ENCODE measurements at regions of chr17 and their contacts with region 1.

Region 1: GRCh38 chr17:7403977-7404736 is at the start of gene TMEM256:
- DNase-seq: peak; percentile 96 to 99
- H3K4me3 ChIP-seq: peak within 1 kb of the TSS; percentile 76
- H3K27ac ChIP-seq: peak within 1 kb of the TSS; percentile 51; the same call in 1 of the 2 replicates
- H3K4me1 ChIP-seq: peaks cover 15% of the 10 kb centered on the region
- H3K27me3 ChIP-seq: no peaks in the 10 kb centered on the region
- CTCF ChIP-seq: no peak
- total RNA-seq, gene TMEM256: 55.4 and 91.7 TPM in 2 replicates

Region 2: GRCh38 chr17:7177196-7177953 is 226.8 kb before region 1 on chr17:
- CTCF ChIA-PET with region 1: no interaction called
- POLR2A ChIA-PET with region 1: no interaction called
- intact Hi-C with region 1: no loop called
- DNase-seq: peak; percentile 39 to 75
- H3K4me3 ChIP-seq: peak overlapping the region; percentile 76
- H3K27ac ChIP-seq: no peak overlapping the region
- H3K4me1 ChIP-seq: peaks cover 4% of the 10 kb centered on the region
- H3K27me3 ChIP-seq: no peaks in the 10 kb centered on the region
- CTCF ChIP-seq: peak; percentile 92

Region 3: DNA sequence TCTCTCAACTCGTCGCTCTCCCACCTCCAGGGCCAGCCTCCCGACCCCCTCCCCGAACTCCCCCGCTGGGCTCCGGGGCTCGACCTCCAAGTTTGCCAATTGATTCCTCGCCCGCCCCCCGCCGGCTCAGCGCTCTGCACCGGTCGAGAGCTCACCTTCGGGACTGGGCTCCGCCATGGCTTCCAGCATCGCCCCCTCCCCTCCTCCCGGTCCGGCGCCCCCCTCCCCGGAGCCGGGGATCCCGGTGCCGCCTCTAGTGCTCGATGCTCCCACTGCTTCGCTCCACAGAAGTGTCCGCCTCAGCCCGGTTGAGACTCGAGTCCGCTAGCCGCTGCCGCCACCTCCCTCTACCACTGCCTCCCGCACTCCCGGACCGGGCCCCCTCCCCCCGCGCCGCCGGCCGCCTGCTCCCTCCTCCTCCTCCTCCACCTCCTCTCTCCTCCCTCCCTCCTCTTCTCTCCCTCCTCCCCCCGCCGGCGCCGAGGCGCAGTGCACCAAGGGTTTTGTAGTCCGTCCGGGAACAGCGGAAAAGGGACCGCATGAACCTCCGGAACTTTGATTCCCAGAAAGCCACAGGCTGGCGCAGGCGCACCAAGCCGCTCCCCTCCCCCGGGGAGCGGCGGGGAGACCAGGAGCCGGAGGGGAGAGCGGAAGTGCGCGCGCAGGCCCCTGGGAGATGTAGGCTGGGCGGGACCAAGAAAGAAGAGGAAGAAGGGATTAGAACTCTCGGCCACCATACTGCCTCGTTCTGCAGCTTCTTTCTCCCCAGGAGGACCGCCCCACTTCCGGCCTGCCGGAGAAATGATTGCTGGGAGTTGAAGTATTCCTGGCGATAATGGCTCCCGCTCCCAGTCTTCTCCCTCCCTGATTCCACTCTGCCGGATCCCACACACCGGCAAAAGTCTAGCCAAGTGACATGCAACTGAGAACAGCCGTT is 164.8 kb before region 1 on chr17 and contains the start of gene PHF23:
- CTCF ChIA-PET with region 1: interaction called, 8 read pairs
- POLR2A ChIA-PET with region 1: interaction called, 10 read pairs
- intact Hi-C with region 1: no loop called
- DNase-seq: peak; percentile 96 to 99
- H3K4me3 ChIP-seq: peak within 1 kb of the TSS; percentile 93
- H3K27ac ChIP-seq: peak within 1 kb of the TSS; percentile 80
- H3K4me1 ChIP-seq: peaks cover 38% of the 10 kb centered on the region
- H3K27me3 ChIP-seq: no peaks in the 10 kb centered on the region
- CTCF ChIP-seq: no peak
- total RNA-seq, gene PHF23: 64.5 and 65.8 TPM in 2 replicates

Region 4: DNA sequence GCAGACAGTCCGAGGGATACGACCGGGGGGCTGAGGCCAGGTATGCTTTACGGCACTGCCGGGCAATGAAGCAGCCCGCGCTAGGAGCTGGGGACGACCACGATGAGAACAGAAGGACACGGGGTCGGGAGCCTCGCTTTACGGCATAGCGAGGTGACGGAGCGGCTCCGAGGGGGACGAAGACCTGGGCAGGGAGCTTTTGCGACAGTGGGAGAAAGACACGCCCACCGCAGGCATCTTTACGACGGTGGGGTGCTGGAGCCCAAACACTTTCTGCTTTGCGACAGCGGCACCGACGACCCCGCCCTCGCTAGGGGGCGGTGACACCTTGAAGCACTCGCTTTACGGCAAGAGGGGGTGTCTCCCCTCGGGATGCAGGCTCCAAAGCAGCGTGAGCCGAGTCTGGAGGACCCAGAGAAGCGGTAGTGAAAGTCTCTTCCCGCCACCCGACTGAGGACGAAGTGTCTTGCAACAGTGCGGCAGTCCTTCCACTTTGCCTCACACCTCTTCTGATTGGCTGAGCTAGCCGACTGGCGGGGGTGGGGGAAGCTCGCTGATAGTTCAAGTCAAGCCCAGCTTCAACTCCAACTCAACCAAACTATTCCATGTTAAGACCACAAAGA is 74.7 kb before region 1 on chr17:
- CTCF ChIA-PET with region 1: no interaction called
- POLR2A ChIA-PET with region 1: interaction called, 10 read pairs
- intact Hi-C with region 1: no loop called
- DNase-seq: peak; percentile 94 to 98
- H3K4me3 ChIP-seq: peak overlapping the region; percentile 100
- H3K27ac ChIP-seq: peak overlapping the region; percentile 67
- H3K4me1 ChIP-seq: peaks cover 16% of the 10 kb centered on the region
- H3K27me3 ChIP-seq: no peaks in the 10 kb centered on the region
- CTCF ChIP-seq: no peak

Region 5: DNA sequence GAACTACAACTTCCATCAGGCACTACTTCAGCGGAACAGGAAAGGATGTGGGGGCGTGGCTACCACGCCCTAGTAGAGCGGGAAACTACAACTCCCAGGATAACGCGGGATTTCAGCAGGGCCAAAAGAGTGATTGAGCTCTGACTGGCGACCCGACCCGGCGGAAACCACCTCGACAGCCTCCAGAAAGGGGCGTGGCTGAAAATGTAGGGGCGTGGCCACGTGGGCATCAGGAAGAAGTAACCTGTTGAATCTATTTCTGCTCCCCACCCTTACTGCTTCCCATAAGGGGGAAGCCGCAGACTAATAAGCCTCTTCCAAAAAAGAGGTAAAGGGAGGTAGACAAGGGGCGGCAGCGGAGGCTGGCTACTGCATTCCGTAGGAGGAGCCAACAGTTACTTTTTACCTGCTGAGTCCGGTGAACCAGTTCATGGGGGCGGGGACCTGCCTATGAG is 31.1 kb after region 1 on chr17 and contains the start of gene TMEM102:
- CTCF ChIA-PET with region 1: interaction called, 19 read pairs
- POLR2A ChIA-PET with region 1: interaction called, 34 read pairs
- intact Hi-C with region 1: loop called (anchors 1 kb)
- DNase-seq: peak; percentile 92 to 99
- H3K4me3 ChIP-seq: peak within 1 kb of the TSS; percentile 57
- H3K27ac ChIP-seq: peak within 1 kb of the TSS; percentile 68
- H3K4me1 ChIP-seq: 0 out of 2 replicates have a peak, but pooled peaks cover 7% of the 10 kb centered on the region
- H3K27me3 ChIP-seq: no peaks in the 10 kb centered on the region
- CTCF ChIP-seq: no peak
- total RNA-seq, gene TMEM102: 17.0 and 20.7 TPM in 2 replicates

Region 6: GRCh38 chr17:7572588-7573323 is 168.6 kb after region 1 on chr17:
- CTCF ChIA-PET with region 1: no interaction called
- POLR2A ChIA-PET with region 1: no interaction called
- intact Hi-C with region 1: loop called (anchors 5 kb)
- DNase-seq: peak; percentile 96 to 100
- H3K4me3 ChIP-seq: peak overlapping the region; percentile 91
- H3K27ac ChIP-seq: peak overlapping the region; percentile 90
- H3K4me1 ChIP-seq: peaks cover 33% of the 10 kb centered on the region
- H3K27me3 ChIP-seq: no peaks in the 10 kb centered on the region
- CTCF ChIP-seq: no peak

Measured in PC-9 (cell line).